Breast epithelium (tissue), 4 donors: ENCODE measurements at regions of chr10 and their contacts with region 1.

Region 1: DNA sequence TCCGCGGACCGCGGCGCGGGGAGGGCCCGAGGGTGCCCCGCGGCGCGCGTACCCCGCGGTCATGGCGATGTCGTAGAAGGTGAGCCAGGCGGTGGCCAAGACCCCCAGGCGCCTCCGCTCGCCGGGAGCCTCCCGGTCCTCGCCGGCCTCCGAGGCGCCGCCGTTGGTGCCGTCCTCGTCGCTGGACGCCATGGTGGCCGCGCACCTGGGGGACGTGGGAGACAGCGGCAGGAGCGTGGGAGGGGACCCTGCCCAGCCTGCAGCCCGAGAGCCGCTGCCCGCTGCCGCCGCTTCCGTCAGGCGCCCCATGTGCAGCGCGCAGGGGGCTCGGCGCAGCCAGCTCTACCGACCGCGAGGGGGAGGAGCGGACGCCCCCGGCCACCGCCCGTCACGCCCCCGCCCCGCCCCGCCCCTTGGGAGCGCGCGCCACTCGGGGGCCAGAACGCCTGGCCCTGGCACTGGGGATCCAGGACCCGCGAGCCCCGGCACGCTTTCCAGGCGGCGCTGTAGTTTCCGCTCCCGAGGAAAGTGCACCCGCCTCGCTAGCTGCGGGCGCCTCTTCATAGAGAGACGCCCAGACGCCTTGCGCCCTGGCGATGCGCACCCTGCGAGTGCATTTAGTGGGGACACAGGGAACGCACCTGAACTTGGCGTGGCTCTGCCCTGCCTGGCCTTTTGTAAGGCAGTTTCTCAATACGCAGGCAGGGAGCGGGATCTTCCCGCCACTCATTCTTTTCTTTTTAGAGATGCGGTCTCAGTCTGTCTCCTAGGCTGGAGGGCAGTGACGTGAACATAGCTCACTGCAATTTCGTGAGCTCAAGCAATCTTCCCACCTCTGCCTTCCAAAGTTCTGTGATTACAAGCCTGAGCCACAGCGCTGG is at the start of gene HACD1:
- DNase-seq: peak; percentile 30 to 57
- H3K4me3 ChIP-seq: peak within 1 kb of the TSS; percentile 71 to 88 (median 86)
- H3K27ac ChIP-seq: peak within 1 kb of the TSS; percentile 64 to 80
- H3K4me1 ChIP-seq: no peaks in the 10 kb centered on the region
- H3K27me3 ChIP-seq: no peaks in the 10 kb centered on the region
- CTCF ChIP-seq: no peak
- POLR2A ChIP-seq: no peak
- total RNA-seq, gene HACD1: 13.1 to 60.3 (median 13.2) TPM

Region 2: DNA sequence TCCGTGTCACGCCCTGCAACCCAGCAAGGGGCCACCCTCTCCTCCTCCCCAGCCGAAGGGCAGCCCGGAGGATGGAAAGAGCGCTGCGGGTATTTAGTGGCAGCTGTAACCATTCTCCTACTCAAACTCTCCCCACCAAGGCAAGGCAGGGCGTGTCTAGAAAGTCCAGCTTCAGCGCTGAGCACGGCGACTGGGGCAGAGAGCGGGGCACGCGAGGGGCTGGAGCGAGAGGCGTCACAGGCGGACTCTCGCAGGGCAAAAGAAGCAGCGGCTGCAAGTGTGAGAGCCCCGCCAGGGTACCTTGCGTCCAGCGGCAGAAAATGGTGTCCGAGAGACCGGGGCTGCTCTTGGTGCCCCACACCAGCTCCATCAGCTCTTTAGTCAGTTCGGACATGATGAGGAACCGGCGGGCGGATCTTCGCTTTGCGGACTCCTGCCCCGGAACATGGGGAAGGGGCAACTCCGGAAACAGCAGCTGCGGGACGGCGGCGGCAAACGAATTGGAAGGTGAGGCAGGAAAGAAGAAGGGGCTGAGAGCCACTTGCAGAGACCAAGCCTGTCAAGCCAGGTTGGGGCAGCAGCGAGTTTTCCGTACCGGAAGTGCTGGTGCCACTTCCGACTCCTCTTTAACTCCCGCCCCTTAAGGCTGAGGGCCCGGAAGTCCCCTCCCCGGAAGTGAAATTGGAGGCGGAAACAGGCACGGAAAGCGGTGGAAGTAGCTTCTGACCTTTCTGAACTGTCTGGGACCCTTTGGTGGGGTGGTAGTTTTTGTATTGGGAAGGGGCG is 1757.2 kb before region 1 on chr10 and contains the start of gene MINDY3:
- intact Hi-C with region 1: loop called (anchors 10 kb)
- DNase-seq: peak; percentile 61 to 75
- H3K4me3 ChIP-seq: peak within 1 kb of the TSS; percentile 86 to 91 (median 87)
- H3K27ac ChIP-seq: peak within 1 kb of the TSS; percentile 67 to 70
- H3K4me1 ChIP-seq: peaks cover 0 to 8% of the 10 kb centered on the region in 2 donors
- H3K27me3 ChIP-seq: peaks cover 0 to 13% of the 10 kb centered on the region in 2 donors
- CTCF ChIP-seq: no peak
- POLR2A ChIP-seq: no peak
- total RNA-seq, gene MINDY3: 33.0 to 38.3 (median 34.8) TPM

Region 3: GRCh38 chr10:17737027-17737965 is 120.0 kb after region 1 on chr10:
- intact Hi-C with region 1: loop called (anchors 10 kb)
- DNase-seq: no peak
- H3K4me3 ChIP-seq: no peak overlapping the region
- H3K27ac ChIP-seq: no peak overlapping the region
- H3K4me1 ChIP-seq: no peaks in the 10 kb centered on the region
- H3K27me3 ChIP-seq: no peaks in the 10 kb centered on the region
- CTCF ChIP-seq: peak in 1 of 3 donors; percentile 53
- POLR2A ChIP-seq: no peak